ENCODE measurements at regions of chr9 and their contacts with region 1.

Region 1: DNA sequence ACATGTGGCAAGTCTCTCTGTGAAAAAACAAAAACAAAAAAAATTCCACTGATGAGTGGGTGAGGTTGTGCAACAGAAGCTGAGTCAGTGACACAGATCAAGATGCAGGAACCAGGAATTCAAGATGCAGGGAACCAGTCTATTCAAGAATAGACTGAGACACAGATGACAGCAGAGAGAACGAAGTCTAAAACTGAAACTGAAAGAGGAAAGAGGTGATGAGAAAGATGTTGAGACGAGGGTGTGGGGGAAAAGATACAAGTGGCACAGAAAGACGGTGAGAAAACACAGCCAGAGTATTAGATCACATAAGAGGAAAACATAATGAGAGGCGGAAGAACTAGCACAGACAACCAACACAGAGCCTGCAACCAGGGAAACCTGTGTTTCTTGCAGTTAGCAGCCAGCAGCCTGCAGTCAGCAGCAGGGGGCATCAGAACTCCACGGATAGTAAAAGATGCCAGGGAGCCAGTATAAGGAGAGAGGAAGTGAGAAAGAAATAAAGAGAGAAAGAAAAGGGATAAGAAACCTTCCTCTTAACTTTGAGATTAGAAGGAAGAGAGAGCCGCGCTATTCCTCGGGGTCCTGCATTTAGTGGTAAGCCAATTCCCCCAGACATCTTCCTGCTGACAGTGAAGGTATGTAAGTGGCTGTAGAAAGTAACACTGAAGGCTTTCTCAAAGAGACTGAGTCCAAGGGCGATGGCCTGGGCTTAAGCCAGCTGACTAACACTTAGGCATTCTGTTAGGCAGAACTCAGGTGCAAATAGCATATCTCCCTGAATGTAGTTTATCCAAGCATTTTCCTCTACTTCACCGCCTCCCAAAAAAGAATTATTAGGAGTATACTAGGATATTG is 79.0 kb downstream of the TLR4 start:
- DNase-seq: peak; percentile 79
- H3K4me3 ChIP-seq: peak overlapping the region; percentile 24
- H3K27ac ChIP-seq: peak overlapping the region; percentile 62
- H3K4me1 ChIP-seq: no peaks in the 10 kb centered on the region
- H3K27me3 ChIP-seq: no peaks in the 10 kb centered on the region
- CTCF ChIP-seq: peak; percentile 55

Region 2: GRCh38 chr9:117596678-117597077 is 186.5 kb before region 1 on chr9:
- intact Hi-C with region 1: no loop called
- DNase-seq: no peak
- H3K4me3 ChIP-seq: no peak overlapping the region
- H3K27ac ChIP-seq: no peak overlapping the region
- H3K4me1 ChIP-seq: no peaks in the 10 kb centered on the region
- H3K27me3 ChIP-seq: no peaks in the 10 kb centered on the region
- CTCF ChIP-seq: no peak

Region 3: DNA sequence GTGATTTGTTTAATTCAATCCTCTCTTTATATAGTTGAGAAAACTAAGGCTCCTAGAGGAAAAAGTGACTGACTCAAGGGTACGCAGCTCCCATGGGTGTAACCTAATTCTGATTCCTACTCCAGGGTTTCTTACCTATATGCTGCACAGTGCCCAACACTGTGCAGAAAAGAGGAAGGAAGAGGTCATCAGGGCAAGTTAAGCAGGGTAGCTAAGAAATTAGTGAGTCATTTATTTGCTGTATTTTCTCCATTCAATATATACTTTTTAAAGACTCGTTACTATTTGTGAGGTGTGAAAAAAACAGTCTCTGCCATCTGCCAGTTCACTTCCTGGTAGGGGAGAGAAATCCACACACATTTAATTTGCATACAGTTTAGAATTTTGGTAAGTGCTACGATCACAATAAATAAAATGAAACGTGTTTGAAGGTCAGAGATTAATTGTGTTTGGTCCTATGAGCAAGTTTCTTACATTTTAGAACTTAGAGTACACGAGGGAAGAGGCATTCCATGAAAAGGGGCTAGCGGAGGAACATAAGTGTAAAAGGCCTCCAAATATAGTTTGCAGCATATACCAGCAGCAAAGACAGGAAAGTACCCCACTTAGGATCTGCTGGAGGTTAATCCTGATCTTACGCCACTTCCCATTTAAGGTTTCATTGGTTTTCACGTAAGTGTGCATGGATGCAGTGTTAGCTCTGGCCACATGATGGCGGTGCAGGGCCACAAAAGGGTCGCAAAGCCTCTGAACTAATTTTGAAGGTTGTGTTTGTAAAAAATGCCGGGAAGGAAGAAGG is 138.8 kb before region 1 on chr9:
- intact Hi-C with region 1: loop called (anchors 10 kb)
- DNase-seq: peak; percentile 77
- H3K4me3 ChIP-seq: no peak overlapping the region
- H3K27ac ChIP-seq: no peak overlapping the region
- H3K4me1 ChIP-seq: no peaks in the 10 kb centered on the region
- H3K27me3 ChIP-seq: no peaks in the 10 kb centered on the region
- CTCF ChIP-seq: peak; percentile 95

Region 4: GRCh38 chr9:119289740-119290433 is 1506.7 kb after region 1 on chr9:
- intact Hi-C with region 1: loop called (anchors 5 kb)
- DNase-seq: peak; percentile 57
- H3K4me3 ChIP-seq: no peak overlapping the region
- H3K27ac ChIP-seq: no peak overlapping the region
- H3K4me1 ChIP-seq: no peaks in the 10 kb centered on the region
- H3K27me3 ChIP-seq: no peaks in the 10 kb centered on the region
- CTCF ChIP-seq: peak; percentile 52

Region 5: GRCh38 chr9:119365291-119366027 is 1582.3 kb after region 1 on chr9:
- intact Hi-C with region 1: loop called (anchors 10 kb)
- DNase-seq: no peak
- H3K4me3 ChIP-seq: no peak overlapping the region
- H3K27ac ChIP-seq: no peak overlapping the region
- H3K4me1 ChIP-seq: no peaks in the 10 kb centered on the region
- H3K27me3 ChIP-seq: peaks cover 25% of the 10 kb centered on the region
- CTCF ChIP-seq: peak; percentile 27